Calu3 (cell line): ENCODE measurements at regions of chr20 and their contacts with region 1.

Region 1: GRCh38 chr20:13212750-13213149 is 8.3 kb upstream of the ISM1 start:
- DNase-seq: no peak
- H3K4me3 Mint-ChIP-seq: no peak overlapping the region
- H3K27ac Mint-ChIP-seq: no peak overlapping the region
- H3K4me1 Mint-ChIP-seq: no peaks in the 10 kb centered on the region
- H3K27me3 Mint-ChIP-seq: peaks cover 64% of the 10 kb centered on the region
- CTCF ChIP-seq: no peak

Region 2: GRCh38 chr20:13174402-13174801 is 38.3 kb before region 1 on chr20:
- CTCF ChIA-PET with region 1: no interaction called
- intact Hi-C with region 1: no loop called
- DNase-seq: no peak
- H3K4me3 Mint-ChIP-seq: no peak overlapping the region
- H3K27ac Mint-ChIP-seq: no peak overlapping the region
- H3K4me1 Mint-ChIP-seq: peaks cover 8% of the 10 kb centered on the region
- H3K27me3 Mint-ChIP-seq: no peaks in the 10 kb centered on the region
- CTCF ChIP-seq: no peak

Region 3: DNA sequence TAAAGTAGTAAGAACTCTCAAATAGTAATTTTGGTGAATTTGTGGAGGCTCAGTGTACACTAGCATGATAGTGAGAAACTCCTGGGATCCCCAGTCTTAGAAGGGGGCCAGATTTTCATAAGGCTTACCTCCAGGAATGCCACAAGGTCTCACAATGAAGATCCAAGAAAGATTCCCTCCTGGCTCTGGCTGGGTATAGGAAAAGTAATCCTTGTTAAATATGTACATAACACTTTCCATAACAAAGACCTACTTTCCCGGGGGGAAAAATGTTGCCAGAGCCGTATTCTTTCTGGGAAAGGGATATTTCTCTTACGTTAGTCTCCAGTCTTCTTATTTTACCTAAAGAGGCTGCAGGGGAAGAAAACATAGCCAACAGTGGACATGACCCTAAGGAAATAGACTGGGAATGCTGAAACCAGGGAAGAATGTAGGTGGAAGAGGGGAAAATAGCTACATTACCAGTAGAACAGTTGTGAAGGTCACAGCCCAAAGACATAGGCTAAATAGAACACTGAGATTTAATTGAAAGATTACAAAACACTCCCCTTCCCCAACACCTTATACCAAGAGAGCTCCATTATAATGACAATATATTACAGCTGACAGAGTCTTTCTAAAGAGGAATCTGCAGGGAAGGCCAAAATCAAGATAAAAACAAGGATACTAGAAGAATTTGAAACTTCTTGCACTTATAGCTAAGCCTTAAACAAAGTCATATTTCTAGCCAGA is 26.5 kb before region 1 on chr20:
- CTCF ChIA-PET with region 1: no interaction called
- intact Hi-C with region 1: no loop called
- DNase-seq: no peak
- H3K4me3 Mint-ChIP-seq: no peak overlapping the region
- H3K27ac Mint-ChIP-seq: no peak overlapping the region
- H3K4me1 Mint-ChIP-seq: no peaks in the 10 kb centered on the region
- H3K27me3 Mint-ChIP-seq: peaks cover 43% of the 10 kb centered on the region
- CTCF ChIP-seq: no peak

Region 4: DNA sequence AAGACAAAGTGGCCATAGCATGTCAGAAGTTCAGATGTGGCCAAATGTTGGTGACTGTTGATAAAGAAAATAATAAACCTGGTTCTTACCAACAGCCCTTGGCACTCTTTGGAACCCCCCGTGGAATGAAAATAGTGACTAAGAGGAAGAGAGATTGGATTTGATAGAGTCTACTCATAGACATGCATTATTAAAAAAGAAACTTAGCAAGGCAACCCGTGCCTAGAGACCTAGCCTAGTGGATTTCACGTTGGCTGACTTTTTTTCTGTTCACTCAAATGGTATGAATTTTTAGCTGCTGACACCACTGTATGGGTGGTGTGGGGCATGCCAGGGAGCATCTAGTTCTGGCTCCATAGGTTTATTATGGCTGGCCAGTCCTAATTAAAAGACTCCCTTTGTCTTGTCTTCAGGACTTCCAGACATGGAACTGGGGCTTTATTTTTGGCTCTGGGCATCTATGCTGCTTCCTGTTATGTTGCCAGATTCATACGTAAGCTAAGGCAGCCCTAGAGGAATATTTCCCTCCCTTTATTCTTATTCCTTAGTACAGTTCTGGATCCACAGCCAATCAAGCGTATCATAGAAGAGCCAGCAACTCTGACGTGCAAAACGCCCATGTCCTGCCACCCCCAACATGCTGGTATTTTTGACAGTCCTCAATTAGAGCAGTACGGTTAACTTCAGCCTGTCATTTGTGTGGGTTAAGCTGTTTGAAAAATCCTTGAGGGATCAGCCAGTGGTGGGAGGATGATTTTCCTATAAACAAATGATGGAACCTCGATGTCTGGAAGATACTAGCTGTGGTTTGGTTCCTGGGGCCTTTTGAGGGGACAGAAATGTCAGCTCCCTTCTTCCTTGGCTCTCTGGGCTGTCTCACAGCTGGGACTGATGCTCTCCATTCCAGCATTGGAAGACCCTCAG is 135.8 kb after region 1 on chr20:
- CTCF ChIA-PET with region 1: no interaction called
- intact Hi-C with region 1: no loop called
- DNase-seq: no peak
- H3K4me3 Mint-ChIP-seq: no peak overlapping the region
- H3K27ac Mint-ChIP-seq: no peak overlapping the region
- H3K4me1 Mint-ChIP-seq: no peaks in the 10 kb centered on the region
- H3K27me3 Mint-ChIP-seq: no peaks in the 10 kb centered on the region
- CTCF ChIP-seq: no peak

Region 5: GRCh38 chr20:14127514-14128223 is 914.9 kb after region 1 on chr20:
- CTCF ChIA-PET with region 1: no interaction called
- intact Hi-C with region 1: loop called (anchors 10 kb)
- DNase-seq: no peak
- H3K4me3 Mint-ChIP-seq: no peak overlapping the region
- H3K27ac Mint-ChIP-seq: no peak overlapping the region
- H3K4me1 Mint-ChIP-seq: peaks cover 8% of the 10 kb centered on the region
- H3K27me3 Mint-ChIP-seq: no peaks in the 10 kb centered on the region
- CTCF ChIP-seq: no peak